AG04450 (cell line): ENCODE measurements at regions of chr7 and their contacts with region 1.

Region 1: GRCh38 chr7:155344600-155345433 is 47.1 kb downstream of the INSIG1 start:
- DNase-seq: peak; percentile 26
- H3K4me3 ChIP-seq: peak overlapping the region; percentile 43
- H3K27ac ChIP-seq: no peak overlapping the region
- H3K27me3 ChIP-seq: no peaks in the 10 kb centered on the region
- CTCF ChIP-seq: peak; percentile 64

Region 2: DNA sequence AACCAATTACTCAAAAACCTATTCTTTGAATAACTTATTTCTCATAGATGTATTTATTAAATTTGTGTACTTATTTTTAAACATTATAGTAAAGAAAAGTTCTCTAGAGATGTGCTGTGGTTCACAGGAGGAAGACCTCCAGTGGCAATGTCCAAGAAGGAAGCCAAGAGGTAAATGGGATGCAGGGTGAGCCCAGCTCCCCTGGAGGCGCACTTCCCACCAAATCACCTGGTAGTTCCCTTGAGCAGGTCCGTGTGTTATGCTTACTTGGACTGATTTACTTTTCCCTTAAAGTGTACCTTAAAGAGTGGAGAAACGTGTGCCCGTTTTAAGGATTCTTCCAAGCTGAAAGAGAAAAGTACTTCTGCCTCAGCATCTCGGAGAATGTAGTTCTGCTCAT is 397.2 kb before region 1 on chr7:
- CTCF ChIA-PET with region 1: interaction called, 11 read pairs
- POLR2A ChIA-PET with region 1: no interaction called
- DNase-seq: no peak
- H3K4me3 ChIP-seq: no peak overlapping the region
- H3K27ac ChIP-seq: no peak overlapping the region
- H3K27me3 ChIP-seq: no peaks in the 10 kb centered on the region
- CTCF ChIP-seq: no peak

Region 3: GRCh38 chr7:154996752-154997151 is 348.1 kb before region 1 on chr7:
- CTCF ChIA-PET with region 1: interaction called, 13 read pairs
- POLR2A ChIA-PET with region 1: no interaction called
- DNase-seq: no peak
- H3K4me3 ChIP-seq: no peak overlapping the region
- H3K27ac ChIP-seq: no peak overlapping the region
- H3K27me3 ChIP-seq: no peaks in the 10 kb centered on the region
- CTCF ChIP-seq: no peak

Region 4: GRCh38 chr7:155205368-155206317 is 139.2 kb before region 1 on chr7:
- CTCF ChIA-PET with region 1: interaction called, 10 read pairs
- POLR2A ChIA-PET with region 1: no interaction called
- DNase-seq: peak; percentile 87
- H3K4me3 ChIP-seq: peak overlapping the region; percentile 46
- H3K27ac ChIP-seq: peak overlapping the region; percentile 82
- H3K27me3 ChIP-seq: no peaks in the 10 kb centered on the region
- CTCF ChIP-seq: no peak

Region 5: DNA sequence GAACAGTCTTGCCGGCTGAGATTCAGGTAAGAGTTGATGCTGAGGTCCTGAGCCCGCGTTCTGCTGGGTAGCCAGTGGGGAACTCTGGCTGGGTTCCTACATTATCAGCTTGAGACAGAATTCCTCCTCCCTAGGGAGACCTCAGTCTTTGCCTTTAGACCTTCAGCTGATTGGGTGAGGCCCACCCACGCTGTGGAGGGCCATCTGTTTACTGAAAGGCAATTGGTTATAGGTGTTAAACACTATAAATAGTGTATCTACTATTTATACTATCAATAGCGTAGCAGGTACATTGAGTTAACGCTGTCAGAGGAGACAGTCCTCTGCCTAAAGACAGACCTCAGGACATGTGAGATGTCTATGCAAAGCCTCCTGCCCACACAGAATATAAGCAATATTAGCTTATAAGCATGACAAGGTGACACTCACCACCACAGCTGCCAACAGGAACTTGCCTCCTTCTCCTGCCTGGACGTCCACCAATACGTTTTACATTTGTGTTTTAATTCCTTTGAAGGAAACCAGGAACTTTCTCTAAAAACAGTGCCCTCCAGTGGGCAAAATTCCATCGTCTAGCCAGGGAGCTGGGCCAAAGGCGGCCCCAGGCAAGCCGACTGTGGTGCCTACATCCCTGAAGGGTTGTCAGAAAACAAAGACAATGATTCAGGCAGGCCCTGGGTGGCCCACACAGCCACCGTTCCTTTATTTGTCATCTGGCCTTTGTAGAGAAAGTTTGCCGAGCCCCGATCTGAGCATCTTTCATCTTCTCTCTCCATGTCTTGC is 11.7 kb after region 1 on chr7:
- CTCF ChIA-PET with region 1: interaction called, 24 read pairs
- POLR2A ChIA-PET with region 1: no interaction called
- DNase-seq: no peak
- H3K4me3 ChIP-seq: no peak overlapping the region
- H3K27ac ChIP-seq: no peak overlapping the region
- H3K27me3 ChIP-seq: peaks cover 21% of the 10 kb centered on the region
- CTCF ChIP-seq: peak; percentile 35

Region 6: GRCh38 chr7:155490697-155491628 is 146.1 kb after region 1 on chr7:
- CTCF ChIA-PET with region 1: no interaction called
- POLR2A ChIA-PET with region 1: no interaction called
- DNase-seq: no peak
- H3K4me3 ChIP-seq: no peak overlapping the region
- H3K27ac ChIP-seq: no peak overlapping the region
- H3K27me3 ChIP-seq: peaks cover 13% of the 10 kb centered on the region
- CTCF ChIP-seq: no peak

Region 7: GRCh38 chr7:155676052-155676451 is 331.2 kb after region 1 on chr7:
- CTCF ChIA-PET with region 1: no interaction called
- POLR2A ChIA-PET with region 1: no interaction called
- DNase-seq: no peak
- H3K4me3 ChIP-seq: no peak overlapping the region
- H3K27ac ChIP-seq: no peak overlapping the region
- H3K27me3 ChIP-seq: no peaks in the 10 kb centered on the region
- CTCF ChIP-seq: no peak